HAP-1 (cell line): ENCODE measurements at regions of chr17 and their contacts with region 1.

Region 1: DNA sequence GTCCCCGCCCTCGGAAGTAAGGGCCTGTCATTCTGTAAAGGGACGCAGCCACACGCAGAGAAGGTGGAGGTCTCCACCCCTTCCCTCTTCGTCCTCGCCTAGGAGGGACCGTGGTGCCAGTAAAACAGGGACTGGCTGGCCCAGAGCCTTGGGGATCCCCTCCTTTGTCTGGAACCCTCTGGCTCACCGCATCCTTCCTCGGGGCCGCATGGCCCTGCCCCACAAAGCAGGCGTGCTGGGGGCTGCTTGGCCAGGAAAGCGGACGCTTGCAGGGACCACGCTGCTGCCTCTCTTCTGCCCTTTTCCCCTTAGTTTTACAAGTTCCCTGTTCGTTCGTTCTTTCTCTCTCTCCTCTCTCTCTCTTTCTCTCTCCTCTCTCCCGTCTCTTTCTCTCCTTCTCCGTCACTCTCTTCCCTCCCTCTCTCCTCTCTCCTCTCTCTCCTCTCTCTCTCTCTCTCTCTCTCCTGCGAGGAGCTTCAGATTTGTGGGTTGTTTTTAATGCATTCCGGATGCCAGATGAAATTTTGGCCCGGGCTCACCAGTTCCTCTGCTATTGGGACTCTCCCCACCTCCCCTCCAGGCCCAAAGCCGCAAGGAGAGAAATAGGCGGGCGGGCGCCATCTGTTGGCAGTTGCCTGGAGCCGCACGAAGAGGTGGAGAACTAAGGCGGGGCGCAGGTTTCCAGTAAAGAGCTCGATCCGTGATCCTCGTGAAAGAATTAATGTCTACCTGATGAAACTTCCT is 35.1 kb upstream of the CDRT4 start:
- DNase-seq: peak; percentile 76 to 91
- H3K4me3 ChIP-seq: no peak overlapping the region
- H3K4me1 ChIP-seq: peaks cover 3% of the 10 kb centered on the region
- H3K27me3 ChIP-seq: no peaks in the 10 kb centered on the region

Region 2: GRCh38 chr17:15257258-15257788 is 245.2 kb before region 1 on chr17:
- in situ Hi-C with region 1: loop called (anchors 5 kb)
- DNase-seq: peak; percentile 58 to 84
- H3K4me3 ChIP-seq: 0 out of 2 replicates have a peak overlapping the region, but pooled peaks have one; percentile 5
- H3K4me1 ChIP-seq: peaks cover 13% of the 10 kb centered on the region
- H3K27me3 ChIP-seq: no peaks in the 10 kb centered on the region

Region 3: GRCh38 chr17:15882058-15882720 is 379.6 kb after region 1 on chr17:
- in situ Hi-C with region 1: no loop called
- DNase-seq: no peak
- H3K4me3 ChIP-seq: no peak overlapping the region
- H3K4me1 ChIP-seq: no peaks in the 10 kb centered on the region
- H3K27me3 ChIP-seq: no peaks in the 10 kb centered on the region